OCI-LY7 (cell line): ENCODE measurements at regions of chr2 and their contacts with region 1.

Region 1: GRCh38 chr2:163182764-163183354 is 344.3 kb upstream of the KCNH7 start:
- DNase-seq: peak; percentile 16
- H3K4me3 ChIP-seq: no peak overlapping the region
- H3K27ac ChIP-seq: no peak overlapping the region
- H3K4me1 ChIP-seq: no peaks in the 10 kb centered on the region
- CTCF ChIP-seq: peak; percentile 87

Region 2: DNA sequence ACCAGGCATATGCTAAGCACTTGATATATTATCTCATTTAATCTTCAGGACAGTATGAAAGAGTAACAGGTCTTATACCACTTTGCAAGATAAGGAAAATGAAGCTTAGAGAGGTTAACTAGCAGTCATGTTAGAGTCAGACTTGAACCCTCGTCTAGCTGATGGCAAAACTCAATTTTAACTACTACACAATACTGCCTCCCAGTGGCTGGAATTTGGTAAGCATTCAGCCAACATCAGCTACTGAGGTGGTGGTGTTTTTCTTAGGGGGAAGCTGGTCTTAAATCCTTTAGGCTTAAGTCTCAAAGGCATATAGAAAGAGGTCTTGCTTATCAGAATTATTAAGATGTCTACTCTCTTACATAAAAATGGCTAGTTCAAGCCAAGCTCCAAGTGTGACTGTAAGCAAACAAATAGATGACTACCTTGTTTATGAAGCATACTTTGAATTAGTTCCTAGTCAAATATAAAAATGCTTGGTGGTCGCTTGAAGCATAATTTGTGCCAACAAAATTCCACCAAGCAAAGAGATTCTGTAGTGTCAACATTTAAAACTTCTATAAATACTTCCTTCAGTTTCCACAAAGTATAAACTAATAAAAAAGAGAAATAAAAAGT is 878.4 kb after region 1 on chr2:
- CTCF ChIA-PET with region 1: no interaction called
- POLR2A ChIA-PET with region 1: no interaction called
- intact Hi-C with region 1: loop called (anchors 10 kb)
- DNase-seq: peak; percentile 16
- H3K4me3 ChIP-seq: no peak overlapping the region
- H3K27ac ChIP-seq: no peak overlapping the region
- H3K4me1 ChIP-seq: no peaks in the 10 kb centered on the region
- CTCF ChIP-seq: peak; percentile 79